PC-9 (cell line): ENCODE measurements at regions of chr15 and their contacts with region 1.

Region 1: GRCh38 chr15:65638681-65639089 is 16.9 kb downstream of the SLC24A1 start:
- DNase-seq: peak; percentile 19 to 57
- H3K4me3 ChIP-seq: no peak overlapping the region
- H3K27ac ChIP-seq: no peak overlapping the region
- H3K4me1 ChIP-seq: 0 out of 2 replicates have a peak, but pooled peaks cover 6% of the 10 kb centered on the region
- H3K27me3 ChIP-seq: no peaks in the 10 kb centered on the region
- CTCF ChIP-seq: peak; percentile 77

Region 2: DNA sequence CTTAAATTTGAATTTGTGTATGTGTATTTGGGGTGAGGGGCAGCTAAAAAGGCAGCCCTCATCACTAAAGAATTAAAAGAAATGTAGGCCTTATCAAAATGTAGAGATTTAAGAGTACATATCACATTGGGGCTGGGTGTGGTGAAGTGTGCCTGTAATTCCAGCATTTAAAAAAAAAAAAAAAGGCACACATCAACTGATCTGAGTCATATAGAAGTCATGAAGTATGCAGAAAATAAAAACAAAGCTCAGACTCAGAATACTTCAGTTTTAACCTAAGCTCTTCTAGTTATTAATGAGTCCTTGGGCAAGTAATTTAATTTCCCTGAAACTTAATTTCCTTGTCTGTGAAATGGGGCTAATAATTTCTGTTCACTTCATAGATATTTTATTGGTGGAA is 14.7 kb after region 1 on chr15:
- CTCF ChIA-PET with region 1: interaction called, 7 read pairs
- POLR2A ChIA-PET with region 1: interaction called, 14 read pairs
- intact Hi-C with region 1: no loop called
- DNase-seq: peak in 1 of 2 experiments; percentile 39
- H3K4me3 ChIP-seq: no peak overlapping the region
- H3K27ac ChIP-seq: no peak overlapping the region
- H3K4me1 ChIP-seq: peaks cover 9% of the 10 kb centered on the region; the same call in 1 of the 2 replicates
- H3K27me3 ChIP-seq: no peaks in the 10 kb centered on the region
- CTCF ChIP-seq: no peak

Region 3: GRCh38 chr15:65962187-65962586 is 323.5 kb after region 1 on chr15:
- CTCF ChIA-PET with region 1: no interaction called
- POLR2A ChIA-PET with region 1: no interaction called
- intact Hi-C with region 1: loop called (anchors 10 kb)
- DNase-seq: peak in 1 of 2 experiments; percentile 35
- H3K4me3 ChIP-seq: no peak overlapping the region
- H3K27ac ChIP-seq: no peak overlapping the region
- H3K4me1 ChIP-seq: no peaks in the 10 kb centered on the region
- H3K27me3 ChIP-seq: no peaks in the 10 kb centered on the region
- CTCF ChIP-seq: peak; percentile 34; the same call in 1 of the 2 replicates